CD4-positive, alpha-beta T cell (primary cell): ENCODE measurements at regions of chr19 and their contacts with region 1.

Region 1: GRCh38 chr19:58519355-58520256 is at the start of gene ZBTB45:
- DNase-seq: peak; percentile 77 to 96 (median 84)
- ATAC-seq: peak; percentile 78
- H3K4me3 ChIP-seq: peak within 1 kb of the TSS; percentile 86
- H3K4me3 Mint-ChIP-seq: peak within 1 kb of the TSS; percentile 99
- H3K27ac ChIP-seq: peak within 1 kb of the TSS; percentile 87 to 95
- H3K27ac Mint-ChIP-seq: peak within 1 kb of the TSS; percentile 98
- H3K4me1 ChIP-seq: peaks cover 51% of the 10 kb centered on the region
- H3K4me1 Mint-ChIP-seq: peaks cover 43% of the 10 kb centered on the region
- H3K27me3 ChIP-seq: no peaks in the 10 kb centered on the region
- H3K27me3 Mint-ChIP-seq: no peaks in the 10 kb centered on the region
- CTCF ChIP-seq: peak; percentile 82
- total RNA-seq, gene ZBTB45: 5.7 to 6.3 TPM

Region 2: GRCh38 chr19:58237324-58237723 is 282.3 kb before region 1 on chr19:
- CTCF ChIA-PET with region 1: no interaction called
- POLR2A ChIA-PET with region 1: no interaction called
- intact Hi-C with region 1: no loop called
- DNase-seq: no peak
- ATAC-seq: no peak
- H3K4me3 ChIP-seq: no peak overlapping the region
- H3K4me3 Mint-ChIP-seq: no peak overlapping the region
- H3K27ac ChIP-seq: no peak overlapping the region
- H3K27ac Mint-ChIP-seq: no peak overlapping the region
- H3K4me1 ChIP-seq: no peaks in the 10 kb centered on the region
- H3K4me1 Mint-ChIP-seq: no peaks in the 10 kb centered on the region
- H3K27me3 ChIP-seq: no peaks in the 10 kb centered on the region
- H3K27me3 Mint-ChIP-seq: no peaks in the 10 kb centered on the region
- CTCF ChIP-seq: no peak

Region 3: GRCh38 chr19:58305065-58305931 is 214.3 kb before region 1 on chr19 and contains the start of gene ERVK3-1:
- CTCF ChIA-PET with region 1: no interaction called
- POLR2A ChIA-PET with region 1: no interaction called
- intact Hi-C with region 1: loop called in 1 of 2 experiments (anchors 5 kb)
- DNase-seq: peak; percentile 84 to 99 (median 92)
- ATAC-seq: peak; percentile 96
- H3K4me3 ChIP-seq: peak within 1 kb of the TSS; percentile 96
- H3K4me3 Mint-ChIP-seq: peak within 1 kb of the TSS; percentile 95
- H3K27ac ChIP-seq: peak within 1 kb of the TSS; percentile 93 to 97
- H3K27ac Mint-ChIP-seq: peak within 1 kb of the TSS; percentile 95
- H3K4me1 ChIP-seq: peaks cover 21% of the 10 kb centered on the region
- H3K4me1 Mint-ChIP-seq: peaks cover 52% of the 10 kb centered on the region
- H3K27me3 ChIP-seq: no peaks in the 10 kb centered on the region
- H3K27me3 Mint-ChIP-seq: no peaks in the 10 kb centered on the region
- CTCF ChIP-seq: no peak
- total RNA-seq, gene ERVK3-1: 150 to 153 TPM

Region 4: DNA sequence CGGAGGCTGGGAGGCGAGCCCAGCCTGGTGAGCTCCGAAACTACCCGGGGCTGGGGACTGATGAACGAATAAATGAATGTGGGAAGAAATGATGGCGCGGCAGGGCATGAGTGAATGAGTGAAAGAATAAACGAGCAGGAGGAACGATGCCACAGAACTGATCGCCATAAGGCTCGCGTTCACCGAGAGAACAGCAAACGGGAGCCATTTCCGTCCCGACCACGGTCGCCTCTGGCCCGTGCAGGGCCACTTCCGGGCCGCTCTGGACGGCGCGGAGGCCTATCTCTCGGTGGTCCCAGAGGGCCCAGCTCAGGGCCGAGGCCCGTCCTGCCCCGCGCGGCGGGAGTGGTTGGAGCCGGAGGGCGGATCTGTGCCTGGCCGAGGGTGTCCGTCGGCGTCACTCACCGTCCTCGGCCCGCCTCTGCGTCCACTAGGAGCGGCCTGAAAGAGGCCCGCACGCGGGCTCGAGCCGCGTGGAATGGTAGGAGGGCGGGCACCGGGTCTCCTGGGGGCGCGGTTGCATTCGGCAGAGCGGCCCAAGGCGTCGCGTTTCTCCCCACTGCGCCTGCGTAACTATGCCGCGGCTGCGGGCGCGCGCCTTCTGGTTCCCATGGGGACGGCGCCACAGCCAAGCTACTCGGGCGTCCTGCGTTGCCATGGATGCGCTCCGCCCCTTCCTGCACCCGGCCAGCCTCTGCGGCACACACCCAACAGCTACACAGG is 157.2 kb before region 1 on chr19 and contains the start of gene ZNF497:
- CTCF ChIA-PET with region 1: interaction called, 6 read pairs
- POLR2A ChIA-PET with region 1: interaction called, 11 read pairs
- intact Hi-C with region 1: no loop called
- DNase-seq: peak; percentile 92 to 99 (median 97)
- ATAC-seq: peak; percentile 90
- H3K4me3 ChIP-seq: peak within 1 kb of the TSS; percentile 84
- H3K4me3 Mint-ChIP-seq: peak within 1 kb of the TSS; percentile 94
- H3K27ac ChIP-seq: peak within 1 kb of the TSS; percentile 58 to 69
- H3K27ac Mint-ChIP-seq: peak within 1 kb of the TSS; percentile 84
- H3K4me1 ChIP-seq: peaks cover 22% of the 10 kb centered on the region
- H3K4me1 Mint-ChIP-seq: peaks cover 12% of the 10 kb centered on the region
- H3K27me3 ChIP-seq: no peaks in the 10 kb centered on the region
- H3K27me3 Mint-ChIP-seq: no peaks in the 10 kb centered on the region
- CTCF ChIP-seq: no peak
- total RNA-seq, gene ZNF497: 0.28 to 0.55 TPM

Region 5: DNA sequence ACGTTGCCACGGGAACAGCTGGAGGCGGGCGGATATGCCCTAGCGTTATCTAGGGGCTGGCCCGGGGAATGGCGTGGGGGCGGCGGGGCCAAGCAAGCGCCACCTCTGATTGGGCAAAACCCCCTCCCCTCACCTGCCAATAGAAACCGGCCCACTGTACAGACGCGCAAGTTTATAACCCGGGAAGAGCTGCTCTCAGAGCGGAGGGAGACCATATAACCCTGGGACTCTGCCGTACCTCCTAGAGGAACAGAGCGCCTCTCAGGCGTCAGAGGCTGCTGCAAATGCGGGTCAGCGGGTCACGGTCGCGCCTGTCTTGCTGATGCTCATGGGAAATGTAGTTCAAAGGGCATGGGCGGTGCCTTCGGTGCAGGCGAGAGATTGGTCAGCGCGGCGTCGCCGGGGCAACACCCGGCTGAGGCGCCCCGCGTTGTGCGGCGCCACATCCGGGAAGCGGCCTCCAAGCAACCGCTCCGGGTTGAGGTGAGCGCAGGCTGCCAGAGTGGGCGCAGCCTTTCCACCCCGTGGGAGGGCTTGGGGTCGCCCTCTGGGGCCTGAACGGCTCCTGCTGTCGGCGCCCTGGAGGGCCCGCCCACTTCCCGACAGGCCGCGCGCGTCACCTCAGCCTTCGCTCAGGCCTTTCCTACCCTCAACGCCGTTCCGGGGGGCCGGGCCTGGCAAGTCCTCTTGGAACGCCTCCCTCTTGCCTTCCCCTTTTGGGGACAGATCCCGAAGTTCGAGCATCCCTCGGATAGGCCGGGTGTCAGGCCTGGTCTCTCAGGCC is 43.7 kb before region 1 on chr19 and contains the start of gene ZNF446:
- CTCF ChIA-PET with region 1: interaction called, 5 read pairs
- POLR2A ChIA-PET with region 1: interaction called, 5 read pairs
- intact Hi-C with region 1: loop called in 1 of 2 experiments (anchors 1 kb)
- DNase-seq: peak; percentile 90 to 99 (median 94)
- ATAC-seq: peak; percentile 82
- H3K4me3 ChIP-seq: peak within 1 kb of the TSS; percentile 87
- H3K4me3 Mint-ChIP-seq: peak within 1 kb of the TSS; percentile 90
- H3K27ac ChIP-seq: peak within 1 kb of the TSS; percentile 76 to 95
- H3K27ac Mint-ChIP-seq: peak within 1 kb of the TSS; percentile 95
- H3K4me1 ChIP-seq: peaks cover 22% of the 10 kb centered on the region
- H3K4me1 Mint-ChIP-seq: peaks cover 23% of the 10 kb centered on the region
- H3K27me3 ChIP-seq: no peaks in the 10 kb centered on the region
- H3K27me3 Mint-ChIP-seq: no peaks in the 10 kb centered on the region
- CTCF ChIP-seq: no peak
- total RNA-seq, gene ZNF446: 13.6 to 14.6 TPM

Region 6: DNA sequence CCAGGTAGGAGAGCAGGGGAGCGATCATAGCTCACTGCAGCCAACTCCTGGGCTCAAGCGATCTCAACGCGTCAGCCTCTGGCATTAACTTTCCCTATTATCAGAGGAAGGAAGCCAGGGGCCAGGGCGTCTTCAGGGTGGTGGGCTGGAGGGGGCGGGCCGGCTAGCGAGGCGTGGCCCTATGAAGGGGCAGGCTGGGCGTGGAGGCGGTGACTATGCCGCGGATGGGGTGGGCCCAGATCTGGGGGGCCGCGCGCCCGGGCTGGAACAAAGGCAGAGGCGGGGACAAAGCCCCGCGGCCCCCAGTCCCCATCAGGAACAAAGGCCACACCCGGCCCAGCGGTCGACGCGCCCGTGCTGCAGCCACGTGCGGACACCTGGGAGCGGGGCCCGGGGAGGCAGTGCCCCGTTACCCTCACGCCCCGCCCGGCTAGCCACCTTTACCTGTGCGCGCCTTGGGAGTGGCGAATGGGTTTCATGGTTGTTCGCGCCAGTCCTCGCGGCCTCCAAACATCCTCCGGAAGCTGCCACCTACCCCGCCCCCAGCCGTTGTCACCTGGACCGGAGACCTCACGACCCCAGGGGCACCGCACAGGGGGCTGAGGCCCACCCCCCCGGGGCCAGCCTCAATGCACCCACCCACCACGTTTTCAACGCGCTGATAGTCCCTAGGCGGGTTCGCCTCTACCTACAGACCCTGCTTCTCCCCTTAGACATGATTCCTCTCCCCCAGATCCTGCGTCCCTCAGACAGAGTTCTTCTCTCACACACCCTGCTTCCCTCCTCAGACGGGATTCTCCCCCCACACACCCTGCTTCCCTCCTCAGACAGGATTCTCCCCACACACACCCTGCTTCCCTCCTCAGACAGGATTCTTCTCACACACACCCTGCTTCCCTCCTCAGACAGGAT is 18.9 kb after region 1 on chr19:
- CTCF ChIA-PET with region 1: interaction called, 34 read pairs
- POLR2A ChIA-PET with region 1: interaction called, 56 read pairs
- intact Hi-C with region 1: loop called in 1 of 2 experiments (anchors 2 kb)
- DNase-seq: peak in 8 of 14 experiments; percentile 32 to 64 (median 54)
- ATAC-seq: peak; percentile 76
- H3K4me3 ChIP-seq: peak overlapping the region; percentile 47
- H3K4me3 Mint-ChIP-seq: peak overlapping the region; percentile 74
- H3K27ac ChIP-seq: no peak overlapping the region
- H3K27ac Mint-ChIP-seq: peak overlapping the region; percentile 63
- H3K4me1 ChIP-seq: peaks cover 19% of the 10 kb centered on the region
- H3K4me1 Mint-ChIP-seq: peaks cover 20% of the 10 kb centered on the region
- H3K27me3 ChIP-seq: peaks cover 5 to 13% of the 10 kb centered on the region in 2 experiments
- H3K27me3 Mint-ChIP-seq: no peaks in the 10 kb centered on the region
- CTCF ChIP-seq: no peak

Region 7: DNA sequence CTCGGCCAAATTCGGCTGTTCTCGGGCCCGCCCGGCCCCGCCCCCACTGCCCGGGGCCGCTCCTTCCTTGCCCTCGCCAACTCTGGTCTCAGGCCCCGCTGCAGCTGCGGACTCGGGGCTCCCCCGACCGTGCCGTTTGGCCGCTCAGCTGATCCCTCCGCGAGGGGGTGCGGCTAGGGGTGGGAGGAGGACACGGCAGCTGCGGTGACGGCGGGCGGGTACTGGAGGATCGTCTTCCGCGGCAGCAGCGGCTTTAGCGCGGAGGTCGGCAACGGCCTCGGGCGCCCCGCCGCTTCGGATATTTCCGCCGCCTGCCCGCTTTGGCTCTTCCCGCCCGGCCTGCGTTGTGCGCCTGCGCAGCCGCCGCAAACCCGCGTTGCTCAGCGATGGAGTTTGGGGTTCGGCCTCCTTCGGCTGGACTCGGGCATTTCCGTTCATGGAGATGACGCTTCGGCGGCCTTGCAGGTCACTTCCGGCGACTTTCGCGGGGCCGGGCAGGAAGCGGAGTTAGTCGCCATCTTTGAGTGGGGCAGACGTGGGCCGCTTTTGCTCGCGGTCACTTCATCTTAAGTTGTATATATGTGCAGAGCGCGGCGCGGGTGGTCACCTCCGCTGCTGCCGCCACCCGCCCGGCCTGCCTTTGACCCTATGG is 39.1 kb after region 1 on chr19:
- CTCF ChIA-PET with region 1: interaction called, 26 read pairs
- POLR2A ChIA-PET with region 1: interaction called, 44 read pairs
- intact Hi-C with region 1: loop called in 1 of 2 experiments (anchors 1 kb)
- DNase-seq: peak; percentile 99 to 100 (median 100)
- ATAC-seq: peak; percentile 70
- H3K4me3 ChIP-seq: peak overlapping the region; percentile 76
- H3K4me3 Mint-ChIP-seq: peak overlapping the region; percentile 98
- H3K27ac ChIP-seq: peak overlapping the region; percentile 88 to 96
- H3K27ac Mint-ChIP-seq: peak overlapping the region; percentile 96
- H3K4me1 ChIP-seq: peaks cover 90% of the 10 kb centered on the region
- H3K4me1 Mint-ChIP-seq: peaks cover 82% of the 10 kb centered on the region
- H3K27me3 ChIP-seq: no peaks in the 10 kb centered on the region
- H3K27me3 Mint-ChIP-seq: no peaks in the 10 kb centered on the region
- CTCF ChIP-seq: no peak

Region 8: GRCh38 chr19:58581227-58582151 is 61.9 kb after region 1 on chr19:
- CTCF ChIA-PET with region 1: interaction called, 60 read pairs
- POLR2A ChIA-PET with region 1: interaction called, 19 read pairs
- intact Hi-C with region 1: loop called (anchors 1 kb)
- DNase-seq: peak; percentile 85 to 94 (median 89)
- ATAC-seq: peak; percentile 100
- H3K4me3 ChIP-seq: no peak overlapping the region
- H3K4me3 Mint-ChIP-seq: peak overlapping the region; percentile 59
- H3K27ac ChIP-seq: peak overlapping the region in 1 of 2 donors; percentile 35
- H3K27ac Mint-ChIP-seq: peak overlapping the region; percentile 77
- H3K4me1 ChIP-seq: peaks cover 9% of the 10 kb centered on the region
- H3K4me1 Mint-ChIP-seq: peaks cover 26% of the 10 kb centered on the region
- H3K27me3 ChIP-seq: no peaks in the 10 kb centered on the region
- H3K27me3 Mint-ChIP-seq: no peaks in the 10 kb centered on the region
- CTCF ChIP-seq: peak; percentile 93